ENCODE measurements at regions of chr3 and their contacts with region 1.

Region 1: DNA sequence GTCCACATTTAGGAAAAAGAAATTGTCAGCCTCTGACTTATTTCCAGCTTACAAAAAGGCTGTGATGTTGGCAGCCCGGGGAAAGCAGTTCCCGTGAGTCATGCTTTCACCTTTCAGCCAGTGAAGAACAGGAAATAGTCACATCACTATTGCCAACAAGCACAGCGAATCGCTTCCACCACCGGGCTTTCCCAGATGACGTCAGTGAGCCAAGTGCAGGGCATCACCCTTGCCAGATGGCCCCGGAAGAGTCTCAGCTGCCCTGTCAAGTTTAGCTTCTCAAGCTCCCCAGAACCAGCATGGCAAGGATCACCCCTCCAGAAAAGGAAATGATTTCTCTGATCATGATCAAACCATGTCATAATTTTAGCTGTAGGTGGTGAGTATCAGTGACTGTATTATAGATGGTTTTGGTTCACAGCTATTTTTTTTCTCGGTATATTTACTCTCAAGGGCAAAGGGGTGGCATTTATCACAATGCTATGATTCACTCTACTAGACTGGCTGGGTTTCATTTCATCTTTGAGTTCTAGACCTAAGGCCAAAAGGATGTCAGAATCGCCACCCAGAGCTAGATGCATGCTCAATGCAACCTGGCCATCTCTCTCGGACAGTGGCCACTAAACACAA is 32.9 kb downstream of the B3GNT5 start:
- DNase-seq: peak; percentile 96 to 100
- H3K4me3 ChIP-seq: peak overlapping the region; percentile 58; the same call in 1 of the 2 replicates
- H3K27ac ChIP-seq: peak overlapping the region; percentile 97
- H3K4me1 ChIP-seq: peaks cover 66% of the 10 kb centered on the region
- H3K27me3 ChIP-seq: no peaks in the 10 kb centered on the region
- CTCF ChIP-seq: no peak

Region 2: DNA sequence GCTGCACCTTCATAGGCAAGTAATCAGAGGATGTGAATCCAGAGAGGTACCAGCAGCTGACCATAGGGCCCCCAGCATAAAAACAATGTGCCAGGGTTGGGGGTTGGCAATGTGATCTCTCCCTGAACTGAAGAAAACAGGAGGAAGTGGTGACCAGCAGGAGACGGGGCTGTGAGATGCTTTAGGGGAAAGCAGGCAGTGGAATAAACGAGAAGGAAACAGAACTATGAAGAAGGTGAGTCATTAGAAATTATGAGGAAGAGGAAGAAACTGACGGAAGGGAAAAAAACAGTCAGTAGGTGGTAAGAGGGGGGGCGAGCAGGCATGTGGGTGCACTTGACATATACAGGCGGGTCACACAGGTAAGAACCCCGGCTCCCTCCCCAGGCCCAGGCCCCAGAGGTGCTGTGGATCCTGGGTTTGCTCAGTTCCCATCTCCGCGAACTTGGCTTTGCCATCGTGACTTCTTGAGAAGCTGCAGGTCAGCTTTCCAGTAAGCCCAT is 75.1 kb before region 1 on chr3:
- CTCF ChIA-PET with region 1: no interaction called
- POLR2A ChIA-PET with region 1: no interaction called
- intact Hi-C with region 1: no loop called
- DNase-seq: peak in 1 of 2 experiments; percentile 50
- H3K4me3 ChIP-seq: no peak overlapping the region
- H3K27ac ChIP-seq: no peak overlapping the region
- H3K4me1 ChIP-seq: no peaks in the 10 kb centered on the region
- H3K27me3 ChIP-seq: no peaks in the 10 kb centered on the region
- CTCF ChIP-seq: no peak

Region 3: GRCh38 chr3:183265834-183266417 is 20.0 kb before region 1 on chr3:
- CTCF ChIA-PET with region 1: interaction called, 8 read pairs
- POLR2A ChIA-PET with region 1: interaction called, 8 read pairs
- intact Hi-C with region 1: loop called (anchors 1 kb)
- DNase-seq: peak; percentile 73 to 99
- H3K4me3 ChIP-seq: no peak overlapping the region; the same call in 1 of the 2 replicates
- H3K27ac ChIP-seq: peak overlapping the region; percentile 85
- H3K4me1 ChIP-seq: peaks cover 65% of the 10 kb centered on the region
- H3K27me3 ChIP-seq: no peaks in the 10 kb centered on the region
- CTCF ChIP-seq: no peak

Region 4: GRCh38 chr3:183275418-183275817 is 10.5 kb before region 1 on chr3:
- CTCF ChIA-PET with region 1: no interaction called
- POLR2A ChIA-PET with region 1: interaction called, 10 read pairs
- intact Hi-C with region 1: loop called (anchors 1 kb)
- DNase-seq: peak; percentile 48 to 82
- H3K4me3 ChIP-seq: peak overlapping the region; percentile 7; the same call in 1 of the 2 replicates
- H3K27ac ChIP-seq: peak overlapping the region; percentile 87
- H3K4me1 ChIP-seq: peaks cover 64% of the 10 kb centered on the region
- H3K27me3 ChIP-seq: no peaks in the 10 kb centered on the region
- CTCF ChIP-seq: no peak

Region 5: DNA sequence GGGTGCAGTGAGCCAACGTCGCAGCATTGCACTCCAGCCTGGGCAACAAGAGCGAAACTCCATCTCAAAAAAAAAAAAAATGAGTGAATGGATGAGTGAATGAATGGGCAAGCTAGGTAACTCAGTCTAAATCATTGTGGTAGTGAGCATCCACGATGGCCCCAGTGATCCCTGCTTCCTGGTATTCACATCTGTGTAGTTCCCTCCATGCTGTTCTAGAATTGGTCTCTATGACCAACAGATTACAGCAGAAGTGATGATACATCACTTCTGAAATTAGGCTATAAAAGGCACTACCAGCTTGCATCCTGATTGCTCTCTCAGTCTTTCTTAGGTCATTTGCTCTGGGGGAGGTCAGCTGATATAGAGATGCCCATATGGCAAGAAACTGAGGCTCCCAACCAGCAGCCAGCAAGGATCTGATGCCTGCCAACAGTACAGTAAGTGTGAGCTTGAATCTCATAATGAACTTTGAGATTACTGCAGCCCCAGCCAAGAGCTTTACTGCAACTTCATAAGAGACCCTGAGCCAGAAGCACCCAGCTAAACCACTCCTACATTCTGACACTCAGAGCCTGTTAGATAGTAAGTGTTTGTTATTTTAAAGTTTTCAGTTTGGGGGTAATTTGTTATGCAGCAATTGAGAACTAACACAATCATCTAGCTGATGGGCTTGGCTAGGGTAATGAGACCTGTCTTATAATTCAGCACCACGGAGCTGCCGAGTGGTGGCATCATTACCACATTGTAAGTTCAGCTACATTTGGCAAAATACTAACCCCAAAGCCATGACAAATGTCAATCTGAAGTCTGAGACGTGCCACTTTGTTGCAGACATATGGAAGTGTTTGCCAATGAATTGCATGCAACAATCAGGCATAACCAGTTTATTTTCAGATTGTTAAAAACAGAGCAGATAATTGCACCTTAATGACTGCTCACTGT is 216.6 kb after region 1 on chr3:
- CTCF ChIA-PET with region 1: no interaction called
- POLR2A ChIA-PET with region 1: no interaction called
- intact Hi-C with region 1: no loop called
- DNase-seq: no peak
- H3K4me3 ChIP-seq: no peak overlapping the region
- H3K27ac ChIP-seq: no peak overlapping the region
- H3K4me1 ChIP-seq: no peaks in the 10 kb centered on the region
- H3K27me3 ChIP-seq: no peaks in the 10 kb centered on the region
- CTCF ChIP-seq: no peak

Region 6: DNA sequence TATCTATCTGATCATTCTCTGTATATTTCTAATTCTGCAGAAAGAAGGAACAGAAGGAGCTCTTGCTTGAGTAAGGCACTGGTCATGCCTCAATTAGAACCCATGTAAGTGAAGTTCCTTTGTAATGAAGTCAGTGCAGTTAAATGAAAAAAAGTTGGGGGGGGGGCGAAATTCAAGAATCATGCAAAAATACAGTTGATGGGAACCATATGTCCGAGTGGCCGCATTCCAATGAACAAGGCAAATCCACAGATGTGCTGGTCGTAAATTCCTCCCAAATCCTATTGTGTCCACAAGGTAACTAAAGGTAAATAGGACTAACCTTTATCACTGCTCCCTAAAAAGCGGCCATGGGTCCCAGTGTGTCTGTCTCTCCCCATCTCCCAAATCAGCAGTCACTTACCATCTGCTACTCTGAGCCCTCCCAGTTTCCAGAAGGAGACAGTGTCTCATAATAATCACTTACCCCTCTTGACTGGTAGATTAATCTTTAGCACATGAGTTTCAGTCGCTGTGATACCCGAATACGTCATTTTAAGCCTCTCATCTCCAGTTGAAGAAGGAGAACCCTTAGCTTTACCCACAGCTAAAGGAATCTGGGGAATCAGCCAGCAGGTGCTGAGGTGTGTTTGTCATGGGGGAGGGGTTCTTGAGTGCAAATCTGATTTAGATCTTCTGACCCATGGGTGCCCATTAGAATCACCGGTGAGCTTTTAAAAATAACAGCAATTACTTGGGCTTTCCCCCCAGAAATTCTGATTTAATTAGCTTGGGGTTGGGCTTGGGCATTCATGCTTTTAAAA is 1219.3 kb after region 1 on chr3:
- CTCF ChIA-PET with region 1: no interaction called
- POLR2A ChIA-PET with region 1: no interaction called
- intact Hi-C with region 1: no loop called
- DNase-seq: no peak
- H3K4me3 ChIP-seq: no peak overlapping the region
- H3K27ac ChIP-seq: no peak overlapping the region
- H3K4me1 ChIP-seq: no peaks in the 10 kb centered on the region
- H3K27me3 ChIP-seq: peaks cover 85% of the 10 kb centered on the region
- CTCF ChIP-seq: no peak

Measured in PC-9 (cell line).